Caco-2 (cell line): ENCODE measurements at regions of chr18 and their contacts with region 1.

Region 1: GRCh38 chr18:22489704-22490103 is 72.0 kb upstream of the CTAGE1 start:
- DNase-seq: peak; percentile 77 to 80
- H3K4me3 ChIP-seq: no peak overlapping the region
- H3K4me3 Mint-ChIP-seq: no peak overlapping the region
- H3K27ac Mint-ChIP-seq: peak overlapping the region; percentile 81
- H3K4me1 ChIP-seq: peaks cover 47% of the 10 kb centered on the region
- H3K4me1 Mint-ChIP-seq: peaks cover 57% of the 10 kb centered on the region
- H3K27me3 ChIP-seq: no peaks in the 10 kb centered on the region
- H3K27me3 Mint-ChIP-seq: no peaks in the 10 kb centered on the region
- CTCF ChIP-seq: no peak

Region 2: DNA sequence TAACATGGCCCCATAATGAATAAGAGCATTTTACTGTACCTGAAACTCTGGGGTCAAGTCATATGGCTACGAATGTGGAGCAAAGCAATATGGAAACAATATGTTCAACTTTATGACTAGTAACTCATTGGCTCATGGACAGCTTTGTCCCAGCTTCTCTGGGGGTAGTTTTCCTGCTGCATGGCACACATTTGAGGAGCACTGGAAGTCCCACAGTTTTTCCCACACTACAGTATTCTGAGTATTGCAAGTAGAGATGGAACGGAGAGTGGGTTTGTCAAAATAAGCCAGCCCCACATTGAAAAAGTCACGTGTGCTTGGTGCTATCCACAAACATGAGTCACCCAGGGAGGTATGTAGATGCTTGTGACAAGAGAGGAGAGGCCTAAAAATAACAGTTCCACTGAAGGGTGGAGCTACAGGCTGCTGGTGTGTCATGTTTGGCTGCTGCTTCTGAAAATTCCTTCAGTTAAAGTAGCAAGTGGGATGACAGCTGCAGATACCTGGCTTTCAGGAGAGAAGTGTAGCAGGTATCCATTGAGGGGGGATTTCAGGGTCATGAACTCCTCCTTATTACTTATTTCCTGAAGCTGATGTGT is 23.7 kb before region 1 on chr18:
- CTCF ChIA-PET with region 1: interaction called, 4 read pairs
- POLR2A ChIA-PET with region 1: interaction called, 4 read pairs
- intact Hi-C with region 1: loop called (anchors 1 kb)
- DNase-seq: peak; percentile 80 to 84
- H3K4me3 ChIP-seq: no peak overlapping the region
- H3K4me3 Mint-ChIP-seq: peak overlapping the region; percentile 64
- H3K27ac Mint-ChIP-seq: peak overlapping the region; percentile 99
- H3K4me1 ChIP-seq: peaks cover 62% of the 10 kb centered on the region
- H3K4me1 Mint-ChIP-seq: peaks cover 50% of the 10 kb centered on the region
- H3K27me3 ChIP-seq: no peaks in the 10 kb centered on the region
- H3K27me3 Mint-ChIP-seq: no peaks in the 10 kb centered on the region
- CTCF ChIP-seq: no peak

Region 3: GRCh38 chr18:22471546-22472131 is 18.1 kb before region 1 on chr18:
- CTCF ChIA-PET with region 1: no interaction called
- POLR2A ChIA-PET with region 1: interaction called, 4 read pairs
- intact Hi-C with region 1: loop called (anchors 1 kb)
- DNase-seq: peak; percentile 37 to 75
- H3K4me3 ChIP-seq: no peak overlapping the region
- H3K4me3 Mint-ChIP-seq: no peak overlapping the region
- H3K27ac Mint-ChIP-seq: no peak overlapping the region
- H3K4me1 ChIP-seq: peaks cover 56% of the 10 kb centered on the region
- H3K4me1 Mint-ChIP-seq: peaks cover 38% of the 10 kb centered on the region
- H3K27me3 ChIP-seq: no peaks in the 10 kb centered on the region
- H3K27me3 Mint-ChIP-seq: no peaks in the 10 kb centered on the region
- CTCF ChIP-seq: no peak

Region 4: DNA sequence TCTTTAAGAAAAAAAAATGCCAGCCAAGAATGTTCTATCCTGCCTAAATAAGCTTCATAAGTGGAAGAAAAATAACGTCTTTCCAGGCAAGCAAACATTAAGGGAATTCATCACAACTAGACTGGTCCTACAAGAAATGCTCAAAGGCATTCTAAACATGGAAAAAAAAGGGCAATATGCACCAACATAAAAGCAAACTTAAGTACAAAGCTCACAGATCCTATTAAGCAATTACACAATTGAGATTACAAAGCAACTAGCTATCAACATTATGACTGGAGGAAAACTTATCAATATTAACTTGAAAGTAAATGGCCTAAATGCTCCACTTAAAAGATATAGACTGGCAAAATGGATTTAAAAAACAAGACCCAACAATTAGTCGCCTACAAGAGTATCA is 168.6 kb after region 1 on chr18:
- CTCF ChIA-PET with region 1: no interaction called
- POLR2A ChIA-PET with region 1: no interaction called
- intact Hi-C with region 1: no loop called
- DNase-seq: no peak
- H3K4me3 ChIP-seq: no peak overlapping the region
- H3K4me3 Mint-ChIP-seq: no peak overlapping the region
- H3K27ac Mint-ChIP-seq: no peak overlapping the region
- H3K4me1 ChIP-seq: no peaks in the 10 kb centered on the region
- H3K4me1 Mint-ChIP-seq: no peaks in the 10 kb centered on the region
- H3K27me3 ChIP-seq: no peaks in the 10 kb centered on the region
- H3K27me3 Mint-ChIP-seq: peaks cover 3% of the 10 kb centered on the region
- CTCF ChIP-seq: no peak